Stomach (tissue), 19 donors: ENCODE measurements at regions of chr6 and their contacts with region 1.

Region 1: GRCh38 chr6:136643850-136644596 is 93.8 kb upstream of the MAP7 start:
- DNase-seq: peak; percentile 95 to 98
- H3K4me3 ChIP-seq: no peak overlapping the region
- H3K27ac ChIP-seq: peak overlapping the region; percentile 46 to 81 (median 61)
- H3K4me1 ChIP-seq: peaks cover 11 to 44% (median 33%) of the 10 kb centered on the region in 4 donors
- H3K27me3 ChIP-seq: no peaks in the 10 kb centered on the region
- CTCF ChIP-seq: peak in 5 of 7 experiments; percentile 68 to 98 (median 92)
- EP300 ChIP-seq: no peak
- POLR2A ChIP-seq: no peak

Region 2: GRCh38 chr6:136539967-136540652 is 103.9 kb before region 1 on chr6:
- intact Hi-C with region 1: no loop called
- DNase-seq: no peak
- H3K4me3 ChIP-seq: no peak overlapping the region
- H3K27ac ChIP-seq: no peak overlapping the region
- H3K4me1 ChIP-seq: peaks cover 0 to 4% (median 0%) of the 10 kb centered on the region in 4 donors
- H3K27me3 ChIP-seq: no peaks in the 10 kb centered on the region
- CTCF ChIP-seq: no peak
- EP300 ChIP-seq: no peak
- POLR2A ChIP-seq: no peak

Region 3: GRCh38 chr6:136719280-136720044 is 75.4 kb after region 1 on chr6:
- intact Hi-C with region 1: loop called (anchors 10 kb)
- DNase-seq: no peak
- H3K4me3 ChIP-seq: no peak overlapping the region
- H3K27ac ChIP-seq: peak overlapping the region in 2 of 5 donors; percentile 21 to 27
- H3K4me1 ChIP-seq: peaks cover 15 to 64% (median 29%) of the 10 kb centered on the region in 4 donors
- H3K27me3 ChIP-seq: no peaks in the 10 kb centered on the region
- CTCF ChIP-seq: no peak
- EP300 ChIP-seq: no peak
- POLR2A ChIP-seq: no peak

Region 4: GRCh38 chr6:136795996-136796395 is 152.0 kb after region 1 on chr6:
- intact Hi-C with region 1: loop called (anchors 5 kb)
- DNase-seq: no peak
- H3K4me3 ChIP-seq: no peak overlapping the region
- H3K27ac ChIP-seq: no peak overlapping the region
- H3K4me1 ChIP-seq: peaks cover 7 to 13% (median 10%) of the 10 kb centered on the region in 4 donors
- H3K27me3 ChIP-seq: no peaks in the 10 kb centered on the region
- CTCF ChIP-seq: no peak
- EP300 ChIP-seq: no peak
- POLR2A ChIP-seq: no peak